ENCODE measurements at regions of chr5 and their contacts with region 1.

Region 1: DNA sequence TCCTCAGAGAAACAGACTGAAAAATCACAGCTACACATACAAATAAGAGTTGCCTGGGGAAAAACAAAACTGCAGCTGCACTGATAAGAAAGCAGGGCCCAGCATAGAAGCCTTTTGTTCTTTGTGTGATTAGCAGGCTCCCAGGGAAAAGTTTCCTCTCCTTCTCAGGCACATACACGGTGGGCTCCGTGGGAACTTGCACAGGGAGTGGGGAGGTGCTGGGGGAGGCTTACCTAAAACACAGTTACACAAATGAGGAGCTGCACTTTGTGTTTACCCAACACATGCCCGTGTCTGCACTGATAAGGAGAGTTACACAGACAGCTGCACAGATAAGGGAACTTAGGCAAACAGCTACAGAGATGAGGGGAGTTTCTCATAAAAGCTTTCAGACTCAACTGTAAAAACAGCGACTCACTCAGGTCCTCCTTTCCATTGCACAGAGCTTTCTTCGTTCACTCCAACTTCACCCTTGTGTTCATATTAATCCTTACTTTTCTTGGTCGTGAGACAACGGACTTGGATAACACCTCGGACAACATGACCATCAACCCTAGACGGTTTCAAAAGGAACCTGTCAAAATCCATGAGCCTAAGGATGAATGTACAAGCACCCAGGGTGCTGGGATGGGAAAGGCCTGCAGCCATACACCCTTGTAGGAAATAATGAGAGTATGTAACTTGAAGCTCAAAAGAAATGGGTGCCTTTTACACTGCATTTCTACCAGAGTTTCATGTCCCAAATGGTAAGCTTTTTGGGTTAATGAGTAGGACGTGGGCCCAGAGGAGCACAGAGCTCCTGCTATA is 50.8 kb downstream of the SERINC5 start:
- DNase-seq: no peak
- H3K4me3 ChIP-seq: no peak overlapping the region
- H3K27ac ChIP-seq: no peak overlapping the region
- H3K4me1 ChIP-seq: peaks cover 0 to 15% (median 1%) of the 10 kb centered on the region in 4 experiments; a peak in 3 of 7 replicates
- H3K27me3 ChIP-seq: no peaks in the 10 kb centered on the region
- CTCF ChIP-seq: no peak
- EP300 ChIP-seq: no peak
- POLR2A ChIP-seq: no peak
- RAD21 ChIP-seq: no peak

Region 2: GRCh38 chr5:80181618-80182211 is 23.3 kb before region 1 on chr5:
- CTCF ChIA-PET with region 1: no interaction called
- POLR2A ChIA-PET with region 1: interaction called, 15 read pairs
- DNase-seq: no peak
- H3K4me3 ChIP-seq: no peak overlapping the region
- H3K27ac ChIP-seq: peak overlapping the region; percentile 39; the same call in 1 of the 2 replicates
- H3K4me1 ChIP-seq: peaks cover 21 to 41% (median 32%) of the 10 kb centered on the region in 4 experiments
- H3K27me3 ChIP-seq: no peaks in the 10 kb centered on the region
- CTCF ChIP-seq: no peak
- EP300 ChIP-seq: no peak
- POLR2A ChIP-seq: no peak
- RAD21 ChIP-seq: no peak

Region 3: GRCh38 chr5:80191991-80192398 is 13.0 kb before region 1 on chr5:
- CTCF ChIA-PET with region 1: interaction called, 4 read pairs
- POLR2A ChIA-PET with region 1: interaction called, 10 read pairs
- DNase-seq: peak in 1 of 2 experiments; percentile 31
- H3K4me3 ChIP-seq: peak overlapping the region in 1 of 4 experiments; percentile 19; a peak in 1 of 8 replicates
- H3K27ac ChIP-seq: no peak overlapping the region
- H3K4me1 ChIP-seq: peaks cover 16 to 42% (median 26%) of the 10 kb centered on the region in 4 experiments
- H3K27me3 ChIP-seq: no peaks in the 10 kb centered on the region
- CTCF ChIP-seq: no peak
- EP300 ChIP-seq: no peak
- POLR2A ChIP-seq: peak in 1 of 2 experiments; percentile 42; a peak in 1 of 3 replicates
- RAD21 ChIP-seq: no peak

Region 4: GRCh38 chr5:80216753-80217596 is 12.0 kb after region 1 on chr5:
- CTCF ChIA-PET with region 1: interaction called, 6 read pairs
- POLR2A ChIA-PET with region 1: interaction called, 17 read pairs
- DNase-seq: no peak
- H3K4me3 ChIP-seq: no peak overlapping the region
- H3K27ac ChIP-seq: no peak overlapping the region
- H3K4me1 ChIP-seq: peaks cover 6 to 19% (median 9%) of the 10 kb centered on the region in 4 experiments
- H3K27me3 ChIP-seq: no peaks in the 10 kb centered on the region
- CTCF ChIP-seq: no peak
- EP300 ChIP-seq: no peak
- POLR2A ChIP-seq: no peak
- RAD21 ChIP-seq: no peak

Region 5: GRCh38 chr5:80268916-80269315 is 63.9 kb after region 1 on chr5:
- CTCF ChIA-PET with region 1: no interaction called
- POLR2A ChIA-PET with region 1: no interaction called
- DNase-seq: no peak
- H3K4me3 ChIP-seq: no peak overlapping the region
- H3K27ac ChIP-seq: no peak overlapping the region
- H3K4me1 ChIP-seq: 0 out of 7 replicates have a peak, but pooled peaks cover 0 to 4% (median 0%) of the 10 kb centered on the region in 4 experiments
- H3K27me3 ChIP-seq: no peaks in the 10 kb centered on the region
- CTCF ChIP-seq: no peak
- EP300 ChIP-seq: no peak
- POLR2A ChIP-seq: no peak
- RAD21 ChIP-seq: no peak

Measured in H1 (cell line).